ENCODE measurements at regions of chr20 and their contacts with region 1.

Region 1: GRCh38 chr20:58481481-58482021 is 33.6 kb downstream of the APCDD1L start:
- DNase-seq: peak; percentile 77
- H3K4me3 Mint-ChIP-seq: no peak overlapping the region
- H3K27ac Mint-ChIP-seq: no peak overlapping the region
- H3K4me1 Mint-ChIP-seq: peaks cover 3% of the 10 kb centered on the region
- H3K27me3 Mint-ChIP-seq: peaks cover 13% of the 10 kb centered on the region

Region 2: DNA sequence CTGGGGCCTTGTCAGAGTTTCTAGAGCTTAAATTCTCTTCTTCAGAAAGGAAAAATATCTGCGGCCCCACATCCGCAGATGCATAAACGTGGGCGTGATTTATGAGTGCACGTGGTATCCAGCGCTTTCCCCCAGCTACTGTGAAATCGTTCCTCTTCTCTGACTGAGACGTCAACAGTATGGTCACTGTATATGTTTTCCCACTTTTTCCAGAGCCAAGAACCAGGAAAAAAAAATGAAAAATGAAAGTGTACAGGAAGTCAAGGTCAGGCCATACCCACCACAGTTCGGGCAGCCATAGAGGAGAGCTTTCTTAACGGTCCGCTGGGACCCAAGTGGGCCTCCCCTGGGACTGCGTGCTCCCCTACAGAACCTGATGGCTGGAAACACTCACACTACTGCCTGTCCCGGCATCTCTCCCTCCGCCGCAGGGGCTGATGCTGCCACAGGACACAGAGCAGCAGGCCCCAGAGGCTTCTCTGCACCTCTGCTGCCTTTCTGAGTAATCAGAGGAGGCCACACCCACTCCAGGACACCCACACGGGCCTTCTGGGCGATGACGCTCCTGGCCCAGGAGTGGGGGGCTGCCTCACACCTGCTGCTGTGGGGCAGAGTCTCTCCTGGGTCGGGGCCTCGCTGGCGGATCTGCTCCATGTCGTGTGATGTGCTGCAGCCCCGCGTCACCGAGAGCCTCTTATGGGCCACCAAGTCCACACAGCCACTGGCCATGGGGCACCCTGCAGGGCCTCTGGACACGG is 153.1 kb after region 1 on chr20:
- intact Hi-C with region 1: loop called (anchors 10 kb)
- DNase-seq: no peak
- H3K4me3 Mint-ChIP-seq: peak overlapping the region; percentile 26
- H3K27ac Mint-ChIP-seq: peak overlapping the region; percentile 74
- H3K4me1 Mint-ChIP-seq: peaks cover 13% of the 10 kb centered on the region
- H3K27me3 Mint-ChIP-seq: peaks cover 9% of the 10 kb centered on the region

Region 3: GRCh38 chr20:58839474-58839874 is 357.9 kb after region 1 on chr20:
- intact Hi-C with region 1: loop called (anchors 10 kb)
- DNase-seq: peak; percentile 82
- H3K4me3 Mint-ChIP-seq: peak overlapping the region; percentile 62
- H3K27ac Mint-ChIP-seq: no peak overlapping the region
- H3K4me1 Mint-ChIP-seq: peaks cover 4% of the 10 kb centered on the region
- H3K27me3 Mint-ChIP-seq: peaks cover 67% of the 10 kb centered on the region

Region 4: GRCh38 chr20:58864350-58864749 is 382.8 kb after region 1 on chr20:
- intact Hi-C with region 1: no loop called
- DNase-seq: no peak
- H3K4me3 Mint-ChIP-seq: no peak overlapping the region
- H3K27ac Mint-ChIP-seq: no peak overlapping the region
- H3K4me1 Mint-ChIP-seq: no peaks in the 10 kb centered on the region
- H3K27me3 Mint-ChIP-seq: peaks cover 58% of the 10 kb centered on the region

Measured in activated CD4-positive, alpha-beta T cell treated with anti-CD3 and anti-CD28 coated beads, Interleukin-2, amount 10 ng/mL, durations not matched to agents 24 days and 14 days (primary cell).